Activated B cell treated with CpG ODN at 0.5 μM for 24 hours (primary cell): ENCODE measurements at regions of chr12 and their contacts with region 1.

Region 1: DNA sequence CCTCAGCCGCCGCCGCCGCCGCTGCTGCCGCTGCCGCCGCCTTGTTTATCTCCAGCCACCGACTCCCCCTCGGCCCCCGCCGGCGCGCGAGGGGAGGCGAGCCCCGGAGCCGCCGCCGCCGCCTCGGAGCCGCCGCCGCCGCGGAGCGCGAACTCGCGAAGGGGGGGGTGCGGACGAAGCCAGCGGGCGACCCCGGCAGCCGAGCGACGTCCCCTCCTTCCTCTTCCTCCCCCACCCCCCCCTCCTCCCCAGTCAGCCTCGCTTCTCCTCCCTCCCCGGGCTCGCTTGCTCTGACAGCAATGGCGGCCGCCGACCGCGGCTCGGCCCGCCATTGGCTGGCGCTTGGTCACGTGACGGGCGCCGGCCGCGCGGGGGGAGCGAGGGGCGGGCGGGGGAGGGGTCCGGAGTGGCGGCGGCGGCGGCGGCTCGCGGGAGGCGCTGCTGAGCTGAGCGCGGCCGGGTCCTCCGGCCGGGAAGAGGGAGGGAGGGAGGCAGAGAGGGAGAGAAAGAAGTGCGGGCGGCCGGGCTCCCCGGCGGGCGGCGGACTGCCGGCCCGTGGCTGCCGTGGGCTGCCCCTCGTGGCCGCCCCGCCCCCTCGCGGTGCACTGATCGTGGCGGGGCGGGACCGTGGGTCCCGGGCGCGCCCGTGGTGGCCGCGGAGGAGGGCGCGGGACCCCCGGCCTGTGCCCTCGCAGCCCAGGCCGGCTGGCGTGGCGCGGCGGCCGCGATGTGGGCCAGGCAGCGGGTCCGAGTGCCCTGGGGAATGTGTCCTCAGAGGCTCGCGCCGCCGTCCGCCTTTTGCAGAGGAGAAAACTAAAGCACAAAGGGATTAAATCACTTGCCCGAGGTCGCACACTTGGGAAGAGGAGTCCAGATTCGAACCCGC is at the start of gene MED13L:
- DNase-seq: peak; percentile 90
- ATAC-seq: peak; percentile 77
- H3K4me3 Mint-ChIP-seq: peak within 1 kb of the TSS; percentile 92
- H3K27ac Mint-ChIP-seq: peak within 1 kb of the TSS; percentile 90
- H3K4me1 Mint-ChIP-seq: peaks cover 45% of the 10 kb centered on the region
- H3K27me3 Mint-ChIP-seq: no peaks in the 10 kb centered on the region
- CTCF ChIP-seq: no peak
- total RNA-seq, gene MED13L: 164 and 183 TPM in 2 replicates

Region 2: DNA sequence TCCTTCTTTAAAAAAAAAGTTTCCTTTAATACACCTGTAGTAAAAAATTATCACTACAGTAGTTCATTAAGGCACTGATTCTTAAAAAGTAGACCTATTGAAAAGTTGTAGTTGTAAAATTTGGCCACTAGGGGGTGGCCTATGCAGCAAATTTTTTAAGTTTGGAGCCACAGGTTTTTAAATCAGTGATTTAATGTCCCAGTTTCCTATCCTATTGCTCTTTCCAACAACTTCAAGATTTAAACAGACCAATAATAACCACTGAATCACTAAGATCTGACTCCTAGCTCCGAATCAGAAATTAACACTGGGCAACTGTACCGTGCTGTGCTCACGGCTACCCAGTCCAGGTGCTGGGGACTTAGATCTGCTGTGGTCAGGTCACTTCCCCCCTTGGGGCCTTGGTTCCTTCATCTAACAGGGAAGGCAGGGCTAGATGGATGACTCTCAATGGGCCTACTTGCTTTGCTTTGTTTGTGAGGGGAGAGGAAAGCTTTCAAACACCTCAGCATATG is 279.5 kb before region 1 on chr12:
- CTCF ChIA-PET with region 1: no interaction called
- POLR2A ChIA-PET with region 1: no interaction called
- intact Hi-C with region 1: loop called (anchors 5 kb)
- DNase-seq: no peak
- ATAC-seq: peak; percentile 90
- H3K4me3 Mint-ChIP-seq: no peak overlapping the region
- H3K27ac Mint-ChIP-seq: peak overlapping the region; percentile 78
- H3K4me1 Mint-ChIP-seq: peaks cover 10% of the 10 kb centered on the region
- H3K27me3 Mint-ChIP-seq: no peaks in the 10 kb centered on the region
- CTCF ChIP-seq: peak; percentile 57

Region 3: DNA sequence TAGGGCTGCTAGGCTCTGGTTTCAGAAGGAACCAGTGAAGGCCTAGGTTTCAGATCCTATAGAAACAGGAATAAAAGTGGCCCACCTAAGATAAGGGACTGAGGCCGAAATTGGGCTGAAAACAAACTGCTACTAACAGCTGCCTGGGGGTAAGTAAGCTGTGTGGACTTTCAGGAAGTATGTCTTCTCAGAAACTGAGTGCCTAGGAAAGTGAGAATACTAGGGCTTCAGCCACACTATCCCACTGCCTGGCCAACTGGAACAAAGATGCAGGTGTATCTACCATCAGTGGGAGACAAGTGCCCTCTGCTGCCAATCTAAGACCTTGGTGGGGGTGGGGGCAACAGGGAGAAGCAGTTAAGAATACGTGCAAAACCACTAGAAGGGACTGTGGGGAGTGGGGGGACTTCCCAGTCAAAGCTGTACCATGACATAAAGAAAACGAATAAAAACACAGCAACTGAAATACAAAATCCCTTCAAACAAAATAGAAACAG is 82.7 kb before region 1 on chr12:
- CTCF ChIA-PET with region 1: no interaction called
- POLR2A ChIA-PET with region 1: no interaction called
- intact Hi-C with region 1: loop called (anchors 5 kb)
- DNase-seq: peak; percentile 39
- ATAC-seq: peak; percentile 89
- H3K4me3 Mint-ChIP-seq: peak overlapping the region; percentile 71
- H3K27ac Mint-ChIP-seq: peak overlapping the region; percentile 89
- H3K4me1 Mint-ChIP-seq: peaks cover 82% of the 10 kb centered on the region
- H3K27me3 Mint-ChIP-seq: no peaks in the 10 kb centered on the region
- CTCF ChIP-seq: no peak

Region 4: DNA sequence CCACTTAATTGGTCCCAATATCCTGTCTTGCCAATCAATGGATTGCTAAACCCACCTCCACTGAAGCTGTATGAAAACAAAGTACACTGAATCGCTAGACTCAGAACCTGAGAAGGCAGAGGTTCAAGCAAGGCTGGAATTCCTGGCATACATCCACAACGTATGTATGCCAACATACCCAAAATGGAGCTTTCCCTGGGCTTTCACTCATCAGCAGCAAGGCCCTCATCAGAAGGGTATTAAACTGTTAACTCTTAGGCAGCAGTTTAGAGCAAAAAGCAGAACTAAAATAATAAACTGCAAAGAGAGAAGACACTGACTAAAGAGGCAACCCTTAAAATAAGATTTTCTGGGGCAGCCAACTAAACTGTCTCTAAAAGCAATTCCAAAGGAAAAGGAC is 13.8 kb before region 1 on chr12:
- CTCF ChIA-PET with region 1: interaction called, 9 read pairs
- POLR2A ChIA-PET with region 1: interaction called, 9 read pairs
- intact Hi-C with region 1: loop called (anchors 1 kb)
- DNase-seq: no peak
- ATAC-seq: peak; percentile 49
- H3K4me3 Mint-ChIP-seq: no peak overlapping the region
- H3K27ac Mint-ChIP-seq: peak overlapping the region; percentile 20
- H3K4me1 Mint-ChIP-seq: peaks cover 43% of the 10 kb centered on the region
- H3K27me3 Mint-ChIP-seq: no peaks in the 10 kb centered on the region
- CTCF ChIP-seq: no peak

Region 5: GRCh38 chr12:116416166-116416565 is 138.5 kb after region 1 on chr12:
- CTCF ChIA-PET with region 1: no interaction called
- POLR2A ChIA-PET with region 1: no interaction called
- intact Hi-C with region 1: no loop called
- DNase-seq: no peak
- ATAC-seq: no peak
- H3K4me3 Mint-ChIP-seq: no peak overlapping the region
- H3K27ac Mint-ChIP-seq: no peak overlapping the region
- H3K4me1 Mint-ChIP-seq: peaks cover 7% of the 10 kb centered on the region
- H3K27me3 Mint-ChIP-seq: no peaks in the 10 kb centered on the region
- CTCF ChIP-seq: no peak

Region 6: GRCh38 chr12:116455540-116456329 is 178.1 kb after region 1 on chr12:
- CTCF ChIA-PET with region 1: no interaction called
- POLR2A ChIA-PET with region 1: interaction called, 11 read pairs
- intact Hi-C with region 1: loop called (anchors 5 kb)
- DNase-seq: no peak
- ATAC-seq: no peak
- H3K4me3 Mint-ChIP-seq: no peak overlapping the region
- H3K27ac Mint-ChIP-seq: no peak overlapping the region
- H3K4me1 Mint-ChIP-seq: peaks cover 38% of the 10 kb centered on the region
- H3K27me3 Mint-ChIP-seq: no peaks in the 10 kb centered on the region
- CTCF ChIP-seq: no peak

Region 7: GRCh38 chr12:116599285-116600136 is 321.9 kb after region 1 on chr12:
- CTCF ChIA-PET with region 1: interaction called, 13 read pairs
- POLR2A ChIA-PET with region 1: no interaction called
- intact Hi-C with region 1: loop called (anchors 1 kb)
- DNase-seq: peak; percentile 62
- ATAC-seq: peak; percentile 86
- H3K4me3 Mint-ChIP-seq: peak overlapping the region; percentile 45
- H3K27ac Mint-ChIP-seq: peak overlapping the region; percentile 18
- H3K4me1 Mint-ChIP-seq: peaks cover 28% of the 10 kb centered on the region
- H3K27me3 Mint-ChIP-seq: no peaks in the 10 kb centered on the region
- CTCF ChIP-seq: peak; percentile 35